ENCODE measurements at regions of chr9 and their contacts with region 1.

Region 1: DNA sequence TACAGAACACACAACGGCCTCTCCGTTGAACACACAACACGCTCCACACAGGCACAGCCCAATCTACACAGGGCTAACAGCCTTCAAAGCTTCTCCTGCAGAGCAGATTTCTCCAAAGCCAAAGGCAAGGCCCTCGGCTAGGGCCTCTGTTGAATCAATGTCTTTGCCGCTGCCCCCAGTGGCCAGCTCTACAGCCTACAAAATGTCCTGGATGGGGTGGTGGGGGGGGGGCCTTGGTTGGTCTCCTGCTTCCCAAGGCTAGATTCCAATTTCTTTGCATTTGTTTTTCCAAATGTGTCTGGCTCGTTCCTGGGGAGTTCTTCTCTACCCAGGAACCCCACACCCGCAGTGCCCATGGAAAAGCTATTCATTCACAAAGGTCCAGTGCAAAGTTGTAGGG is 167.2 kb downstream of the PAX5 start:
- DNase-seq: peak; percentile 26
- H3K4me3 ChIP-seq: no peak overlapping the region
- H3K27ac ChIP-seq: no peak overlapping the region
- H3K4me1 ChIP-seq: peaks cover 14% of the 10 kb centered on the region
- H3K27me3 ChIP-seq: no peaks in the 10 kb centered on the region
- CTCF ChIP-seq: 0 out of 2 replicates have a peak, but pooled peaks have one; percentile 38

Region 2: GRCh38 chr9:36855448-36856315 is 11.2 kb before region 1 on chr9:
- CTCF ChIA-PET with region 1: no interaction called
- POLR2A ChIA-PET with region 1: no interaction called
- intact Hi-C with region 1: no loop called
- DNase-seq: no peak
- H3K4me3 ChIP-seq: no peak overlapping the region
- H3K27ac ChIP-seq: no peak overlapping the region
- H3K4me1 ChIP-seq: no peaks in the 10 kb centered on the region
- H3K27me3 ChIP-seq: no peaks in the 10 kb centered on the region
- CTCF ChIP-seq: no peak

Region 3: DNA sequence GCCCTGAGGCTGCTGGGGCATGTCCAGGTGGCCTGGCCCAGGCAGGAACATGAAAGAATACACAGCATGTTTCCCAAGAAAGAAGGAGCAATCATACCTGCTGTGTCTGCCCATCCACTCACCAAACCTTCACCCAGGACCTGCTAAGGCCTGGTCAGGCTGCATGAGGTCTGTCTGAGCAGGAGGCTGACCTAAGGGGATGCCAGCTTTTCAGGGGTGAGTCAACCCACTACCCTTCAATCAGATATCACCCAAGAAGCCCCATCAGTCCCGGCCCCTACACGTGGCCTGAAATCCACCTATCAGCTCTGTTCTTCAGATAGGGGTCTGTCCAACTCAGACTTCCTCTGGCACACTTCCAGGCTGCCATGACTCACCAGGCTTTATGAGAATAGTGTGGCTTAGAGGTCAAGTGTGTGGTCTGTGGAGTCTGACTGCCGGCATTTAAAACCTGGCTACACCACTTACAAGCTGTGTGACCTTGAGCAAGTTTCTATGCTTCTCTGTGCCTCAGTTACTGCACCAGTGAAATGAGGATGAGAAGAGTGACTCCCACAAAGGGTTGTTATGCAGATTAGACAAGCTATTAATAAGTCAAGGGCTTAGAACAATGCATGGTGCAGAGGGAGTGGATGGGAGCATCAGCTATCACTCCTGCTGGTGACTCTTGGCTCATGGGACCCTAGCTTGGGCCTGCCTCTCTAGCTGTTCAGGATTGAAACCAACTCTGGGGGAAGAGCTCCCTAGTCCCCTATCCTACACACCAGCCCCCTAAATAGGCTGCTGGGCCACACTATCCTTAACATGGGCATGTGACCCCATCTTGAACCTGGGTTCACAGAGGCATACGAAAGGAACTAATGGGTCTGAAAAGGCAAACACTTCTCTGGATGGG is 36.9 kb after region 1 on chr9:
- CTCF ChIA-PET with region 1: no interaction called
- POLR2A ChIA-PET with region 1: no interaction called
- intact Hi-C with region 1: no loop called
- DNase-seq: no peak
- H3K4me3 ChIP-seq: no peak overlapping the region
- H3K27ac ChIP-seq: no peak overlapping the region
- H3K4me1 ChIP-seq: peaks cover 2% of the 10 kb centered on the region
- H3K27me3 ChIP-seq: no peaks in the 10 kb centered on the region
- CTCF ChIP-seq: no peak

Region 4: GRCh38 chr9:37200433-37201005 is 333.7 kb after region 1 on chr9:
- CTCF ChIA-PET with region 1: interaction called, 10 read pairs
- POLR2A ChIA-PET with region 1: no interaction called
- intact Hi-C with region 1: no loop called
- DNase-seq: peak; percentile 91
- H3K4me3 ChIP-seq: no peak overlapping the region
- H3K27ac ChIP-seq: peak overlapping the region; percentile 78
- H3K4me1 ChIP-seq: peaks cover 60% of the 10 kb centered on the region
- H3K27me3 ChIP-seq: no peaks in the 10 kb centered on the region
- CTCF ChIP-seq: no peak